Right cardiac atrium (tissue), 5 donors: ENCODE measurements at regions of chr2 and their contacts with region 1.

Region 1: GRCh38 chr2:168766600-168766999 is 35.8 kb upstream of the NOSTRIN start:
- DNase-seq: peak in 1 of 3 donors; percentile 39
- ATAC-seq: peak in 1 of 2 donors; percentile 26
- H3K4me3 ChIP-seq: no peak overlapping the region
- H3K27ac ChIP-seq: no peak overlapping the region
- H3K4me1 ChIP-seq: peaks cover 2% of the 10 kb centered on the region
- H3K27me3 ChIP-seq: no peaks in the 10 kb centered on the region

Region 2: GRCh38 chr2:168912901-168913369 is 146.3 kb after region 1 on chr2:
- intact Hi-C with region 1: loop called in 2 of 4 experiments (anchors 10 kb)
- DNase-seq: peak; percentile 28 to 72 (median 61)
- ATAC-seq: peak; percentile 60 to 78
- H3K4me3 ChIP-seq: peak overlapping the region; percentile 48
- H3K27ac ChIP-seq: no peak overlapping the region
- H3K4me1 ChIP-seq: no peaks in the 10 kb centered on the region
- H3K27me3 ChIP-seq: no peaks in the 10 kb centered on the region